Posterior vena cava (tissue), 2 donors: ENCODE measurements at regions of chr17 and their contacts with region 1.

Region 1: DNA sequence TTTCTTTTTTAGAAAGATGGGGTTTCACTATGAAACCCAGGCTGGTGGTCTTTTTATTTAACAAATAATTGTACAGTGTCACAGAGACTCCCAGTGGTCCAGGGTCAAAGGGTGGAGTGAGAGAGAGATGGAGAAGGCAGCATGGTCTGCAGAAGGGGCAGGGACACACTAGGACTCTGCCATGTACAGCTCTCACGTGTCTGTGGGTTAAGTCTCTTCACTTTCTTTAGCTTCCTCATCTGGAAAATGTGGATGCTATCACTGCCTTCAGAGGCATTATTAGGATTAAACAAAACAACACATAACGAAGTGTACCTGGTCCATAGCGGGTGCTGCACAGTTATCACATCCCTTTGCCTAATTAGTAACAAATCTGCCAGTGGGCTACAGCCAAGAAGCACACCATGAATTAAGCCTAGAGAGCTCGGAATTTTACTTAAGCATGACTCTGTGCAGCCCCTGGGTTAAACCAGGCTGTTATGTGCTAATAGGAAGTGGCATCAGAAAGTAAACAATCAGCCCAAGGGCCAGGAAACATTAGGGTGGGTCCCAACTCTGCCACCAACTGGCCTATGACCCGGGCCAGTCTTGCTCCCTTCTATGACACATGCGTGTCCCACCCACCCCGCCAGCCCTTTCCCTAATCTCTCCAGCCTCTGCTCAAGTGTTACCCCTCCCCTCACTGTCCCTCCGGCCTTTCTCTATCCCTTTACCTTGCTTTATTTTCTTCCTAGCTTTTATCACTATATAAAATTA is 13.9 kb downstream of the TOP3A start:
- DNase-seq: no peak

Region 2: GRCh38 chr17:17947966-17948365 is 352.9 kb before region 1 on chr17:
- intact Hi-C with region 1: loop called in 1 of 2 experiments (anchors 5 kb)
- DNase-seq: no peak